Mammary epithelial cell (primary cell): ENCODE measurements at regions of chr4 and their contacts with region 1.

Region 1: DNA sequence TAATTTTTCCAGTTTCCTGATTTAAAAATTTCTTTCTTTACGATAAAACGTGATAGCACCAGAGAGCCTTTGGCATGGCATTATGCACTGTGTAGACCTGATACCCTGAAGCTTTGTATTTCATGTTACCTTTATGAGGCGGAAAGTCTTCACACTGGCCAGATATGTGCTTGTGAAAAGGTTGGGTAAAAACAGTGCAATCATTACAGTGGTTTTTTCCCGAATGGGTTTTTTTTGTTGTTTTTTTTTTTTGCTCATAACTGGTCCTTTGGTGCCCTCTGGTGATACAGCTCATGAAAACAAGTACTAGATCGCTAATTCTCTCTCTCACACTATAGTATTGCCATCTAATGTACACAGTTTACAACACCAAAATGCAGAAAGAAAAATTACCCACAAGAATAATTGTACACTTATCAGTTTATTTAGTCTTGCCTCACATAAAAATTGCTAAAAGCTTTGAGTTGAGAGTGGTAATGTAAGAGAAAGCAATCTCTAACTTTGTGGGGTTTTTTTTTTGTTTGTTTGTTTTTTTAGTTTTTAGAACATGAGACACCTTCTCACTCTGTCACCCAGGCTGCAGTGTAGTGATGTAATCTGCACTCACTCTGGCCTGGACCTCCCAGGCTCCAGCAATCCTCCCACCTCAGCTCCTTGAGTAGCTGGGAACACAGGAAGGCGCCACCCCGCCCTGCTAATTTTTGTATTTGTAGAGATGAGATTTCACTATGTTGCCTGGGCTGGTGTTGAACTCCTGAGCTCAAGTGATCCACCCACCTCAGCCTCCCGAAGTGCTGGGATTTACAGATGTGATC is 21.3 kb downstream of the SPCS3 start:
- DNase-seq: peak; percentile 25
- H3K4me3 ChIP-seq: no peak overlapping the region
- H3K27ac ChIP-seq: no peak overlapping the region
- H3K4me1 ChIP-seq: no peaks in the 10 kb centered on the region
- H3K27me3 ChIP-seq: no peaks in the 10 kb centered on the region
- CTCF ChIP-seq: peak; percentile 32 to 55

Region 2: DNA sequence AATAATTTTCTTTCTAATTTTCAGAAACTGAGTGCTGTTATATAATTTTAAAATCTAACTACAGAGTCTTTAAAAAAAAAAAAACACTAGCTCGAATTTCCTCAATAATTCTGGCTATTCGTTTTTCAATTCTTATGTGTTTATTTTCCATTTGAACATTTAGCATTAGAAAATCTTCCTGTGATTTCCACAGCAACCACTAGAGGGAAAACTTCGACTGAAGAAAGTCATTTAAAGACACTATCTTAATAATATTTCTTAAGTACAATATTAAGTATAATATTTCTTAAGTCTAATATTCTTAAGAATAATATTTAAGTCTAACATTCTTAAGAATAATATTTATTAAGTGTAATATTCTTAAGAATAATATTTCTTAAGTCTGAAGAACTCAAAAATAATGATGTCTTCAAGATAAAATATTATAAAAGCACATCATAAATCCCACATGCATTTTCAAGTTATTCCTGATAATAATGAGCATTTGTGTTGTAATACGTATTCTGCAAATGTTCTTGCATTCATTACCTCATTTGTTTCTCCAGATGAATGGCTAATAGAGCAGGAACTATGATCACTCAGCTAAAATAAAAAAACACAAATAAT is 393.9 kb before region 1 on chr4:
- CTCF ChIA-PET with region 1: no interaction called
- dilution Hi-C with region 1: no loop called
- in situ Hi-C with region 1: loop called in 1 of 2 experiments (anchors 25 kb)
- intact Hi-C with region 1: loop called (anchors 5 kb)
- DNase-seq: no peak
- H3K4me3 ChIP-seq: no peak overlapping the region
- H3K27ac ChIP-seq: no peak overlapping the region
- H3K4me1 ChIP-seq: no peaks in the 10 kb centered on the region
- H3K27me3 ChIP-seq: peaks cover 8% of the 10 kb centered on the region
- CTCF ChIP-seq: peak; percentile 60 to 75

Region 3: DNA sequence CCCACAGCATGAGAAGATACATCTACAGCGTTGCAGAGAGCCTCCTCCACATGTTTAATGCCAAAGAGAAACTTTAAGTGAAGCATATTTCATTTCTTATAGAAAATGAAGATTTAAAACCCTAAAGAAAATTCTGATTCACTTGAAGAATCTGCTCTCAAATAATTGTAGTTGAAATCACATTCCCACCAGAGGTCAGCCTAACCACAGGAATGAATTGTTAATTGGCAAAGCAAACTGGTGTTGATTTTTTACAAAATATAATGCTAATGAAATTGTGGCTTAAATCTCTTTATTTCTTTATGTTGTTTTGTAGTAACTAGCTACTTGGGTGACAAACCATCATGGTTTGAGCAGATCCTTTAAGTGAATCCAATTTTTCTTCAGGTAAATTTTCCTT is 306.6 kb before region 1 on chr4:
- CTCF ChIA-PET with region 1: no interaction called
- dilution Hi-C with region 1: no loop called
- in situ Hi-C with region 1: no loop called
- intact Hi-C with region 1: loop called (anchors 2 kb)
- DNase-seq: peak; percentile 4
- H3K4me3 ChIP-seq: no peak overlapping the region
- H3K27ac ChIP-seq: no peak overlapping the region
- H3K4me1 ChIP-seq: no peaks in the 10 kb centered on the region
- H3K27me3 ChIP-seq: no peaks in the 10 kb centered on the region
- CTCF ChIP-seq: peak in 1 of 2 donors; percentile 42

Region 4: DNA sequence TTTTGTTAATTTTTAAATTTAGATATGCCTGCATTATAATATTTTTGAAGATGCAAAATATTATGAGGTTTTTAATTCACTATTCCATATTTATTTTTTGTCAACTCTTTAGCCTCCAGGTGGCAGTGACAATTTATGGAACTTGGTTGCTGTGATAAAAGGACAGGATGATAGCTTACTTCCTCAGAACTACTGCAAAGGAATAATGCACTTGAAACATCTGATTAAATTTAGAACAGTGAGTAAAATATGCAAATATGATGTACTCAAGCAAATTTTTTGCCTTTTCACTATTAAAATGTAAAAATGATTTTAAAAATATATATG is 190.8 kb before region 1 on chr4:
- CTCF ChIA-PET with region 1: no interaction called
- dilution Hi-C with region 1: no loop called
- in situ Hi-C with region 1: loop called (anchors 10 kb)
- intact Hi-C with region 1: loop called (anchors 1 kb)
- DNase-seq: peak; percentile 11
- H3K4me3 ChIP-seq: no peak overlapping the region
- H3K27ac ChIP-seq: no peak overlapping the region
- H3K4me1 ChIP-seq: no peaks in the 10 kb centered on the region
- H3K27me3 ChIP-seq: no peaks in the 10 kb centered on the region
- CTCF ChIP-seq: peak in 1 of 2 donors; percentile 52

Region 5: GRCh38 chr4:176277162-176277904 is 63.7 kb before region 1 on chr4:
- CTCF ChIA-PET with region 1: no interaction called
- dilution Hi-C with region 1: no loop called
- in situ Hi-C with region 1: no loop called
- intact Hi-C with region 1: loop called (anchors 1 kb)
- DNase-seq: peak; percentile 53
- H3K4me3 ChIP-seq: no peak overlapping the region
- H3K27ac ChIP-seq: no peak overlapping the region
- H3K4me1 ChIP-seq: peaks cover 15% of the 10 kb centered on the region
- H3K27me3 ChIP-seq: no peaks in the 10 kb centered on the region
- CTCF ChIP-seq: peak; percentile 52 to 72

Region 6: DNA sequence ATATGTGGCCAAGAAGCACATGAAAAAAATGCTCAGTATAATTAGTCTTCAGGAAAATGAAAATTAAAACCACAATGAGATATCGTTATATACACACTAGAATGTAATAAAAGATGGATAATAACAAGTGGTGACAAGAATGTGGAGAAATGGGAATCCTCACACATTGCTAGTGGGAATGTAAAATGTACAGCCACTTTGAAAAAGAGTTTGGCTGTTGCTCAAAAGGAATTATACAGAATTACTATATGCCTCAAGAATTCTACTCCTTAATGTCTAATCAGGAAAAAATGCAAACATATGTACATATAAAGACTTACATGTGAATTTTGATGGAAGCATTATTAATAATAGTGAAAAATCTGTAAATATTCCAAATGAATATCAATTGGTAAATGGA is 80.9 kb after region 1 on chr4:
- CTCF ChIA-PET with region 1: no interaction called
- dilution Hi-C with region 1: no loop called
- in situ Hi-C with region 1: no loop called
- intact Hi-C with region 1: no loop called
- DNase-seq: no peak
- H3K4me3 ChIP-seq: no peak overlapping the region
- H3K27ac ChIP-seq: no peak overlapping the region
- H3K4me1 ChIP-seq: no peaks in the 10 kb centered on the region
- H3K27me3 ChIP-seq: no peaks in the 10 kb centered on the region
- CTCF ChIP-seq: no peak